Activated T-helper 2 cell treated with anti-CD3 and anti-CD28 coated beads, Interferon-gamma antibody, Interleukin-2, Interleukin-4, amounts not matched to agents 10 μg/mL and 5 μg/mL and 100 μg/mL, durations not matched to agents 14 hours and 24 hours and 36 hours (primary cell): ENCODE measurements at regions of chr9 and their contacts with region 1.

Region 1: DNA sequence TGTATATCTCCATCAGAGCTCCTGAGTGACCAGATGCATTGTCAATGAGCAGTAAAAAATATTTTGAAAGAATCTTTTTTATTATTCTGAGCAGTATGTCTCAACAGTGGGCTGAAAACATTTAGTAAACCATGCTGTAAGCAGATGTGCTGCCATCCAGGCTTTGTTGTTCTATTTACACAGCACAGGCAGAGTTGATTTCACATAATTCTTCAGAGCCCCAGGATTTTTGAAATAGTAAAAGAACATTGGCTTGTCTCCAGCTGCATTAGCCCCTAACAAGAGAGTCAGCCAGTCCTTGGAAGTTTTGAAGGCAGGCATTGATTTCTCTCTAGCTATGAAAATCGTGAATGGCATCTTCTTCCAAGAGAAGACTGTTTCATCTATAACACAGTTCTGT is 25.2 kb upstream of the ENTREP1 start:
- DNase-seq: no peak
- H3K4me3 Mint-ChIP-seq: no peak overlapping the region
- H3K27ac Mint-ChIP-seq: no peak overlapping the region
- H3K4me1 Mint-ChIP-seq: no peaks in the 10 kb centered on the region
- H3K27me3 Mint-ChIP-seq: peaks cover 13% of the 10 kb centered on the region

Region 2: GRCh38 chr9:70429899-70430298 is 1130.1 kb after region 1 on chr9:
- intact Hi-C with region 1: loop called (anchors 5 kb)
- DNase-seq: no peak
- H3K4me3 Mint-ChIP-seq: no peak overlapping the region
- H3K27ac Mint-ChIP-seq: no peak overlapping the region
- H3K4me1 Mint-ChIP-seq: no peaks in the 10 kb centered on the region
- H3K27me3 Mint-ChIP-seq: peaks cover 1% of the 10 kb centered on the region